ENCODE measurements at regions of chr17 and their contacts with region 1.

Region 1: DNA sequence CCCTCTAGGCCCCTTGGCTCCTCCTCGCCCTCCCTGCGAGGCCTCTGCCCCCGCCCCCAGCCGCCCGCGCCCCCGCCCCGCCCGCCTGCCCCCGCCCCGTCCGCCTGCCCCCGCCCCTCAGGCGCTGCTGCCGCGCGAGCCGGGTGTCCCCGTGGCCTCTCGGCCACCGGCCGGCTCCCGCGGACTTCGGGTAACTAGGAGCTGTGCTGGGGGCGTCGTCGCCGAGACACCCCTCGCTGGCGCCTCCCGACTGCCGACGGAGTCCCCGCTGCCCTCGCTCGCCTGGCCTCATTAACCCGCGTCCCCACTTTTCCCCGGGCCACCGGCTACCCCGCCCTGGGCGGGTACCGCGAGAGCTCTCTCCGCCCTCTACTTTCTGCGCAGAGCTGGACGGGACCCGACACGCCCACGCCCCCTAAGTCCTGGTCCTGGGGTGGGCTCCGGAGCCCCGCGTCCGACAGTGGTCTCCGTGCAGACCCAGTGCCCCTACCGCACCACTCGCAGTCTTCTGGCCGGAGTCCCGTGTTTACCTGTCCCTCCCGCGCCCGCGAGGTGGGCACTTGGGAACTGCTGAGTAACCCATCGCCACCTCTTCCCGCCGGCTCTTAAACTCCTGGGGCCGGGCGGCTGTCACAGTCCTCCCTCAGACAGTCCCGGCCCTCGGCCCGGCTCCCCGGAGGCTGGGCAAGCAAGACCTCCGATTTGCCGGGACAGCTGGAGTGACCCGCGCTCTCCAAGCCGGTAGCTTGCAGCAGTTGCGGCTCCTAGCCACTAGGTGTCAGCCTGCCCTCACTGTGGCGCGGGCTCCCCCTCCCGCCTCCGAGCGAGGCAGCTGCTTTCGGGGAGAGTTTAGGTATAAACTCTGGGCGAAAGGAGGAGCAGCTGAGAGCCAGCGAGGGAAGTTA is at the start of gene TLCD1:
- H3K4me3 ChIP-seq: peak within 1 kb of the TSS; percentile 55
- H3K27ac ChIP-seq: peak within 1 kb of the TSS; percentile 99
- H3K4me1 ChIP-seq: peaks cover 9% of the 10 kb centered on the region; the same call in 1 of the 2 replicates
- CTCF ChIP-seq: peak; percentile 100

Region 2: GRCh38 chr17:28318759-28319660 is 407.5 kb before region 1 on chr17 and contains the start of gene TMEM97:
- CTCF ChIA-PET with region 1: no interaction called
- POLR2A ChIA-PET with region 1: no interaction called
- H3K4me3 ChIP-seq: peak within 1 kb of the TSS; percentile 69
- H3K27ac ChIP-seq: peak within 1 kb of the TSS; percentile 88
- H3K4me1 ChIP-seq: peaks cover 10% of the 10 kb centered on the region
- CTCF ChIP-seq: peak; percentile 88

Region 3: GRCh38 chr17:28710861-28711722 is 15.4 kb before region 1 on chr17:
- CTCF ChIA-PET with region 1: interaction called, 19 read pairs
- POLR2A ChIA-PET with region 1: interaction called, 190 read pairs
- H3K4me3 ChIP-seq: peak overlapping the region; percentile 51
- H3K27ac ChIP-seq: peak overlapping the region; percentile 89
- H3K4me1 ChIP-seq: peaks cover 3% of the 10 kb centered on the region
- CTCF ChIP-seq: no peak

Region 4: GRCh38 chr17:28763804-28764266 is 37.4 kb after region 1 on chr17:
- CTCF ChIA-PET with region 1: interaction called, 73 read pairs
- POLR2A ChIA-PET with region 1: interaction called, 21 read pairs
- H3K4me3 ChIP-seq: no peak overlapping the region
- H3K27ac ChIP-seq: no peak overlapping the region
- H3K4me1 ChIP-seq: no peaks in the 10 kb centered on the region; the same call in 1 of the 2 replicates
- CTCF ChIP-seq: peak; percentile 51; the same call in 1 of the 2 replicates

Region 5: DNA sequence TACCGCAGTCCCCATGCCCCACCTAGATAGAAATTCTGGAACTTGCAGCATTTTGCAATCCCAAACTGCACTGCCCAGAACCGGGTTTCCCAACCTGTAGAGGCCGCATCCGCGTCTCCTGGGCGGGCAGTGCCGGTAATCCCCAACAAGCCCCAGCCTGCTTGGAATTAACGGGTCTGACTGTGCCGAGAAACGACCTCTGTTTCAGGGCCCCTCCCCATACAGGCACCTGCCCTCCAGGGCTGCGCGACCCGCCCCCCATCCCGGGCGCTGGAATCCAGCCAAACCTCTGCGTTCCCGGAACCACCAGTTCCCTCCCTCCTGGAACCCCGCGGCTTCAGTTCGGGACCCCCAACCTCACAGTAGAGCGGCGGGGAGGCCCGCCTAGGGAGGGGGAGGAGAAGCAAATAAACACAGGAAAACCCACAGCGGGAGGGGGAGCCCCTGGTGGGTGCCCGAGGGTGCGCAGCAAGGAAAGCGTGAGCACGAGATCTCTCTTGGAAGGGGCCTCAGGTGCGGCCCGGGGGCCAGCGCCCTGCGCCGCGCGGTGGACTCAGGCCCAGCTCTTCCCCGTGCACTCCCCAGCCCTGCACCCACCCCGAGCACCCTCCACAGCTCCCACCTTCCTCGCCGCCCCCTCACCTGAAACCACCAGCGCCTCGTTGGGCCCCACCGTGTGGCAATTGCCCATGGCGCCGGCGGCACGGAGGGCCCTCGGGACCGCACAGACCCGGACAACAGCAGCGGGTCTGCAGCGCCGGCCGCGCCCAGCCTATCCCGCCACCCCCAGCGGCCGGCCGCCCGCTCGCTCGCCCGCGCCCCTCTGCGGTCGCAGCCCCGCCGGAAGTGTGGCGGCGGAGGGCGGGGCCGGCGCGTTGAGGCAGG is 170.6 kb after region 1 on chr17 and contains the start of gene FLOT2:
- CTCF ChIA-PET with region 1: interaction called, 61 read pairs
- POLR2A ChIA-PET with region 1: interaction called, 11 read pairs
- H3K4me3 ChIP-seq: peak within 1 kb of the TSS; percentile 88
- H3K27ac ChIP-seq: peak within 1 kb of the TSS; percentile 90
- H3K4me1 ChIP-seq: peaks cover 9% of the 10 kb centered on the region; the same call in 1 of the 2 replicates
- CTCF ChIP-seq: peak; percentile 55

Region 6: DNA sequence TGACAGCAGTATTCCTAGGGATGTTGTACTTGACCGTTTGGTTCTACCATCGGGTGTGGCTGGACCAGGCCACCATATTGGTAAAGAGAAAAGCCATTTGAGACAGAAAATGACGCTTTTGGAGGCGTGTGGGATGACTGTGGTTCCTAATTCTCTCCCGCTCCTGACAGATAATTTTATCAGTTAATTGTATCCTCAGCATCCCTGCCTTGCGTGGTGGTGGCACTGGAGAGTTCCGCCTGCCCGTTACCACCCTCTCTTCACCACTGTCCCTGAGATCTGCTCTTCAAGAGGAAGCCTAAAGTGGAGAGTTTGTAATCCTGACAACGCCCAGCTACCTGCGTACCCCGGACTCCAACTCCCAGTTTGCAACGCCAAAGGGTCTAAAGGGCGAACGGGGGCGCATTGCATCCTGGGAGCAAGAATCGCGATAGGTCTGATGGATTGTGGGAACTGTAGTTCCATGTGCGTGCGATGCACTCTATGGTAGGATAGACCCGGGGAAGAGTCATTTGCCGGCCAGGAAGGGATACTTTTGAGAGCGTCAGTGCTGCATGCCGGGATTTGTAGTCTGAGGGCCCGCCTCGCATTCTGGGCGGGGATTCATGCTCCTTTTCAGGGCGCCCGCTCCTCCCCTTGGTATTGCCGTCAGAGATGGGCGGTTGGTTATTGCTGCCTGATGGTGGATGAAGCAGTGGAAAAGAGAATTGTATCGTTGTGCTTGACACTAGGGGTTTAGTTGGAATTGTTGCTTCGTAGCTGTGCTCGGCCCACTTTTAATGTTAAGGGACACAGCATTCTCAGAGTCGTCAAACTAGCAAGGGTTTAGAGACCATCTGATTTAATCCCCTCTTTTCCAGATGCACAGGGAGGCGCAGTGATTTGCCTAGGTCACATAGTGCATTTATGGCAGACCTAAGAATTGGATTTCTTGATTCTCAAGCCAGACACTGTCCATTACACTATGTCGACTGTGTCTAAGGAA is 225.8 kb after region 1 on chr17:
- CTCF ChIA-PET with region 1: interaction called, 63 read pairs
- POLR2A ChIA-PET with region 1: interaction called, 76 read pairs
- H3K4me3 ChIP-seq: peak overlapping the region; percentile 73
- H3K27ac ChIP-seq: peak overlapping the region; percentile 87
- H3K4me1 ChIP-seq: peaks cover 7% of the 10 kb centered on the region
- CTCF ChIP-seq: no peak

Region 7: DNA sequence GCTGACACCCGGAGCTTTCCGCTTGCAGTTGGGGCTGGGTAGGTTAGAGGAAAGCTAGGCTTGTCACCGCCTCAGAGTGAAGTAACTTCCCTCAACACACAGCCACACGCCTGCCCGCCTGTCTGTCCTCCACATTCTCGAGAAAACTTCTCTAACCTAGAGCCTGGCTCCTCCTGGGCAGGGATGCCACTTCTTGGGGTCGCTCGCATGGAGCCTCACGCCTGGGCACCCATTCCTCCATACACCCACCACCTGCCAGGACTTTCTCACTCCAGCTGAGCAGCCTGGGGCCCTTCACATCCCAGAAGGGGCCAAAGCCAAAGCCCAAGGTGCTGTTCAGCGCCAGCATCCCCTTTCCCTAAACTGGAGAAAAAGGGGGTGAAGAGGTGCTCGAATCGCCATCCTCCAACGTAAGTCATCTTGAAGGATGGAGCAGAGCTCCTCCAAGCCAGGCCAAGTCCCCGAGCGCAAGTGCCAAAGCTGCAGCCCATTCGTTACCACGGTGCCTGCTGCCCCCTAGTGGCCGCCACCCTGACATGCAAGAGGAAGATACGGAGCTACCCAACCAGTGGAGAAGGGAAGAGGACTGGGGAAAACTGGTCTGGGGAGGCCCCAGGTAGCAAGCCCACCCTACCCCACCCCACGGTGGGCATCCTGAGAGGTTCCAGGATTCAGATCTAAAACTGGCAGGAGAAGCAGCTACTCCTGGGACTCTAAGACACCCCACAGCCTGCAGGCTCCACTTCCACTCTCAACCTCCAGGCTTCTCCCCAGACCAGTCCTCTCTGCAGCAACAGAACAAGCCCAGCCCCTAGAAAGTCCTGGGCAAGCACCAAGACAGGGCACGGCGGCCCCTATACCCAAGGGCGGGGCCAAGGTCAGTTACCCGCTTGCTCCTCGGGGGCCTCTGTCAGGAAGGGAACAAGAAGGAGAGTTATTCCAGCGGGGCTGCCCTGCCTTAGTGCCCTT is 390.6 kb after region 1 on chr17:
- CTCF ChIA-PET with region 1: interaction called, 34 read pairs
- POLR2A ChIA-PET with region 1: interaction called, 13 read pairs
- H3K4me3 ChIP-seq: no peak overlapping the region
- H3K27ac ChIP-seq: no peak overlapping the region
- H3K4me1 ChIP-seq: no peaks in the 10 kb centered on the region
- CTCF ChIP-seq: peak; percentile 89

Region 8: DNA sequence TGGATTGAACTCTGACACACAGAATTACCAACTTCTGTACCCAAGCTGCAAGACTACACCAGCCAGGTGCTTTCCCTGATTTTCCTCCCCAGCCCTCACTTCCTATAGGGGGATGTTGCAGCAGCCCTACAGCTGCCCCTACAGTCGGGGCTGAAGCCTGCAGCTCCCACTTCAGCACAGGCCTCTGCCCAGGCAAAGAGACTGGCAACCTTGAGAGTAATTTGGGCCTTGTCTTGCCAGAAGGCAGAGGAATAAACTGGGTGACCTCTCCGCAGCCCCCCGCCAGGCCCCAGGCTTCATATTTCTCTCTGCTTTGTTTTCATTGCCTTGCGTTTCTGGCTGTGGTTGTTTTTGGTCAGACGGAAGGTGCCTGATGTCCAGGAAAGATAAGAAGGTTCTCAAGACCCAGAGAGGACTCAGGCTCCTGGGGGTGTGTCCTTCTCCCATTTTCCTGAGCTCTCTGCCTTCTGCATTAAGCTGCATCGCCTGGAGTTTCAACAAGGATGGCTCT is 1477.0 kb after region 1 on chr17:
- CTCF ChIA-PET with region 1: no interaction called
- POLR2A ChIA-PET with region 1: no interaction called
- H3K4me3 ChIP-seq: no peak overlapping the region
- H3K27ac ChIP-seq: no peak overlapping the region
- H3K4me1 ChIP-seq: no peaks in the 10 kb centered on the region
- CTCF ChIP-seq: no peak